ENCODE measurements at regions of chr9 and their contacts with region 1.

Region 1: DNA sequence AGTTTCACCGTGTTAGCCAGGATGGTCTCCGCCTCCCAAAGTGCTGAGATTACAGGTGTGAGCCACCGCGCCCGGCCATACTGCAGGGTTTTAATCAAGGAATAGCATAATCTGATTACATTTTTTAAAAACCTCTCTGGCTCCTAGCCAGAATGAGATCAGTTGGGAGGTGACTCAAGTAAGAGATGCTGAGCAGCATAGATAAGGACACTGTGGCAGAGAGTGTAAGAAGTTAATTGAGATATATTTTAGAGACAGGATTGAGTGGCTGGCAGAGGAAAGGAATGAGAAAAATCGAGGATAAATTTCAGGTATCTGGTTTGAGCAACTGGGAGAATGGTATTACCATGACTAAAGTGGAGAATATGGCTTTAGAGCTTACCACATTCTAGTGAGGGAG is 7.3 kb upstream of the RIGI start:
- DNase-seq: no peak
- ATAC-seq: no peak
- H3K4me3 ChIP-seq: no peak overlapping the region
- H3K4me3 Mint-ChIP-seq: no peak overlapping the region
- H3K27ac ChIP-seq: no peak overlapping the region
- H3K27ac Mint-ChIP-seq: no peak overlapping the region
- H3K4me1 ChIP-seq: no peaks in the 10 kb centered on the region
- H3K4me1 Mint-ChIP-seq: peaks cover 0 to 3% (median 2%) of the 10 kb centered on the region in 3 donors
- H3K27me3 ChIP-seq: no peaks in the 10 kb centered on the region
- H3K27me3 Mint-ChIP-seq: no peaks in the 10 kb centered on the region

Region 2: DNA sequence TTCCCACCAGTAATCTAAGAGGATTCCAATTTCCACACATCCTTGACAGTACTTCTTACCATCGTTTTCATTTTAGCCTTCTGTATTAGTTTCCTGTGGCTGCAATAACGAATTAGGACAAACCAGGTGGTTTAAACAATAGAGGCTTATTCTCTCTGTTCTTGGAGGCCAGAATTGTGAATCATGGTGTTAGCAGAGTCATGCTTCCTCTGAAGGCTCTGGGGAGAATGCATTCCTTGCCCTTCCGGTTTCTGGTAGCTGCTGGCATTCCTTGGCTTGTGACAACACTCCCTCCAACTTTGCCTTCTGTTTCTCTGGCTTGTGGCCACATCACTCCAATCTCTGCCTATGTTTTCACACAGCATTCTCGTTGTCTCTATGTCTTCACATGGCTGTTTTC is 30.9 kb before region 1 on chr9:
- CTCF ChIA-PET with region 1: interaction called in 1 of 2 experiments, 3 read pairs
- POLR2A ChIA-PET with region 1: interaction called in 1 of 2 experiments, 10 read pairs
- DNase-seq: no peak
- ATAC-seq: no peak
- H3K4me3 ChIP-seq: no peak overlapping the region
- H3K4me3 Mint-ChIP-seq: no peak overlapping the region
- H3K27ac ChIP-seq: no peak overlapping the region
- H3K27ac Mint-ChIP-seq: no peak overlapping the region
- H3K4me1 ChIP-seq: no peaks in the 10 kb centered on the region
- H3K4me1 Mint-ChIP-seq: peaks cover 2 to 16% (median 15%) of the 10 kb centered on the region in 3 donors
- H3K27me3 ChIP-seq: no peaks in the 10 kb centered on the region
- H3K27me3 Mint-ChIP-seq: no peaks in the 10 kb centered on the region

Region 3: DNA sequence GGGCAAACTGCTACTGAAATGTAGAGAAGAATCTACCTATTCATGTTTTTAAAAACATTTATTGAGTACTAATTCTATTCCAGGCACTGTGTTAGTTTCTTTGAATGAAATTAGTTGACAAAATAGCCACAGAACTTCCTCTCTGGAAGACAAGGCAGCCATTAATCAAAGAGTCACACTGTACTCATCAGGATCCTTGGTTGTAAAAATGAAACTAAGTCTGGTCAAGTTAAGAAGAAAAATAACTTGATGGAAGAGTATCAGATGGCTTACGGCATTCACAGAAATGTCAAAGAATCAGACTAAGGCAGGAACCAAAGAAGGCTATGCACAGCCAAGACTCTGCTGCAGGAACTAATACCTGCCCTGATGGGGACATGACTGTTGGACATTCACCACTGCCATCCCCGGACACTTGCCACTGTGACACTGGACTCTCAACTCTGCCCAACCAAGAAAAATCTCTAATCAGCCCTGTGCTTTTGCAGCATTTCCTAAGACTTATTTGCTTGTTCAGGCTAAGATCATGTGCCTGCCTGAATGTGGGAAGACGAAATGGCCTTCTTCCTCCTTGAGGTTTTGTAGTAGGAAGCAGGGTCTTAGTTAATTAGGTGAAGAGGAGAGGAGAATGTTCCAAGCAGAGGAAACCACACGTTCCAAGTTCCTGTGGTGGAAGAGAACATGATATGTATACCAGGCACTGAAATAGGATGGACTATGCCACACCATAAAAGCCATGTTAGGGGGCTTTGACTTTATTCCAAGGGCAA is 62.9 kb after region 1 on chr9:
- CTCF ChIA-PET with region 1: no interaction called
- POLR2A ChIA-PET with region 1: no interaction called
- DNase-seq: no peak
- ATAC-seq: no peak
- H3K4me3 ChIP-seq: no peak overlapping the region
- H3K4me3 Mint-ChIP-seq: no peak overlapping the region
- H3K27ac ChIP-seq: no peak overlapping the region
- H3K27ac Mint-ChIP-seq: no peak overlapping the region
- H3K4me1 ChIP-seq: no peaks in the 10 kb centered on the region
- H3K4me1 Mint-ChIP-seq: no peaks in the 10 kb centered on the region
- H3K27me3 ChIP-seq: no peaks in the 10 kb centered on the region
- H3K27me3 Mint-ChIP-seq: peaks cover 16 to 35% of the 10 kb centered on the region in 2 donors